Calu3 (cell line): ENCODE measurements at regions of chr14 and their contacts with region 1.

Region 1: GRCh38 chr14:60724137-60724619 is at the start of gene SIX4:
- DNase-seq: peak; percentile 75
- H3K4me3 Mint-ChIP-seq: peak within 1 kb of the TSS; percentile 92
- H3K27ac Mint-ChIP-seq: peak within 1 kb of the TSS; percentile 87
- H3K4me1 Mint-ChIP-seq: peaks cover 11% of the 10 kb centered on the region
- H3K27me3 Mint-ChIP-seq: no peaks in the 10 kb centered on the region
- CTCF ChIP-seq: no peak
- total RNA-seq, gene SIX4: 20.9 and 22.8 TPM in 2 replicates

Region 2: GRCh38 chr14:60637479-60638315 is 86.5 kb before region 1 on chr14:
- CTCF ChIA-PET with region 1: no interaction called
- intact Hi-C with region 1: no loop called
- DNase-seq: no peak
- H3K4me3 Mint-ChIP-seq: no peak overlapping the region
- H3K27ac Mint-ChIP-seq: no peak overlapping the region
- H3K4me1 Mint-ChIP-seq: no peaks in the 10 kb centered on the region
- H3K27me3 Mint-ChIP-seq: no peaks in the 10 kb centered on the region
- CTCF ChIP-seq: no peak

Region 3: GRCh38 chr14:60734465-60735242 is 10.5 kb after region 1 on chr14 and contains the start of gene MNAT1:
- CTCF ChIA-PET with region 1: interaction called, 5 read pairs
- intact Hi-C with region 1: loop called (anchors 1 kb)
- DNase-seq: peak; percentile 83
- H3K4me3 Mint-ChIP-seq: peak within 1 kb of the TSS; percentile 81
- H3K27ac Mint-ChIP-seq: peak within 1 kb of the TSS; percentile 63
- H3K4me1 Mint-ChIP-seq: peaks cover 8% of the 10 kb centered on the region
- H3K27me3 Mint-ChIP-seq: no peaks in the 10 kb centered on the region
- CTCF ChIP-seq: no peak
- total RNA-seq, gene MNAT1: 44.6 and 48.0 TPM in 2 replicates

Region 4: GRCh38 chr14:60753264-60754119 is 29.3 kb after region 1 on chr14:
- CTCF ChIA-PET with region 1: no interaction called
- intact Hi-C with region 1: no loop called
- DNase-seq: no peak
- H3K4me3 Mint-ChIP-seq: no peak overlapping the region
- H3K27ac Mint-ChIP-seq: no peak overlapping the region
- H3K4me1 Mint-ChIP-seq: peaks cover 18% of the 10 kb centered on the region
- H3K27me3 Mint-ChIP-seq: no peaks in the 10 kb centered on the region
- CTCF ChIP-seq: no peak

Region 5: DNA sequence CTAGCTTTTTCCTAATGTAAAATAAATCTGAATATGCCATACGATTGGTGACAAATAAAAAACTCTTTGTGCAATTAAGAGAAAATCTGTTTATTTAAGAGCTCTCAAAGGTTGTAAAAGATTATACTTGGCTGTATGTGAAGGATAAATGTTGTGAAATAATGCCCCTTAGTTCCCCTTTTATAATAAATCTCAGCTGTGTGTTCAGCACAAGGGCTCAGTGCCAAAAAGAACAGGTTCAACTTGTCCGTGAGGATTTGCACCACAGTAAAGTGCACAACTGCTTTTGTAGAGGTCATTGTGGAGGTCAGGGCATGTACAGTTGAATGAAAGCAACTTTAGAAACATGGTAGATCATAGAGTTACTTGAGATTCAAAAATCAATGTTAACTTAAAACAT is 138.1 kb after region 1 on chr14:
- CTCF ChIA-PET with region 1: no interaction called
- intact Hi-C with region 1: loop called (anchors 5 kb)
- DNase-seq: peak; percentile 84
- H3K4me3 Mint-ChIP-seq: peak overlapping the region; percentile 22
- H3K27ac Mint-ChIP-seq: peak overlapping the region; percentile 71
- H3K4me1 Mint-ChIP-seq: peaks cover 37% of the 10 kb centered on the region
- H3K27me3 Mint-ChIP-seq: no peaks in the 10 kb centered on the region
- CTCF ChIP-seq: no peak

Region 6: DNA sequence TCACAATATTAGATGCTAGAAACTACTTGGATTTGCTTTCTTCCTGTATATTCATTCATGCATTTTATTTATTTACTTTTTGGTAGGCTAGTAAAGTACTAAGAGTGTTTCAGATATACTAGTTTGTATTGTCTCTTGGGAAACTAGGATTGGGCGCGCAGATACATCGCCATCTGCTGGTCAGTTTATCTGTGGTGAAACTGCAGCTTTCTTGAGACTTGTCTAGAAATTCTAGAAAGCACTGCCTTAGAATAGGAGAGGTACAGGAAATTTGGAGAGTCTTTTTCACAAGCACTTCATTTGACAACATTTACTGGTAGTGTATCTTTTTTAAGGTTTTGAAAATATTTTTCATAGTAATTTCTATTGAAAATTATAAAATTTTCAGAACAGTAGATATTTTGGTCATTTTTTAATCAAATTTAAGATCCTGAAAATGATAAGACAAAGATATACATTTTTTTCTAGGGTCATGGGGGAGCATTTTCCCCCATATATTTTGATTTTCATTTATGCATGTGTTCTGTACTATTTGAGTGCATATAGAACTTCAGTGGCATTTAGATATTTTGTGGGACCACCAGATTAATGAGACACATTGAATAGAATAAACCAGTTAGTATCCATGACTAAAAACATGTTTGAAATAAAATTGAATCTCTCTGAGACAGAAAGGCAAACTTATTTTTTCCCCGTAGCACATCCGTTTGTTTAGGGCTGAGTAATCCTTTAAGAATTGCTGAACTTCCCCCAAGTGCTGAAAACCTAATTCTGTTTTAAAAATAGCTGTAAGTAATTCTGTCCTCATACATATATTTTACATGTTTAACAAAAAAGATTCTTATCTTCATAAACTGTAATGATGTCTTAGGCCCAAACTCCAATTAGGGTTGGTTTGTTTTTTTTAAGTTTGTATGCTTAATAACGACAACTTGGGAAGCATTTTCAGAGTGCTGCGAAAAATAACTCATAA is 301.4 kb after region 1 on chr14:
- CTCF ChIA-PET with region 1: no interaction called
- intact Hi-C with region 1: loop called (anchors 5 kb)
- DNase-seq: peak; percentile 59
- H3K4me3 Mint-ChIP-seq: no peak overlapping the region
- H3K27ac Mint-ChIP-seq: no peak overlapping the region
- H3K4me1 Mint-ChIP-seq: no peaks in the 10 kb centered on the region
- H3K27me3 Mint-ChIP-seq: no peaks in the 10 kb centered on the region
- CTCF ChIP-seq: peak; percentile 56

Region 7: DNA sequence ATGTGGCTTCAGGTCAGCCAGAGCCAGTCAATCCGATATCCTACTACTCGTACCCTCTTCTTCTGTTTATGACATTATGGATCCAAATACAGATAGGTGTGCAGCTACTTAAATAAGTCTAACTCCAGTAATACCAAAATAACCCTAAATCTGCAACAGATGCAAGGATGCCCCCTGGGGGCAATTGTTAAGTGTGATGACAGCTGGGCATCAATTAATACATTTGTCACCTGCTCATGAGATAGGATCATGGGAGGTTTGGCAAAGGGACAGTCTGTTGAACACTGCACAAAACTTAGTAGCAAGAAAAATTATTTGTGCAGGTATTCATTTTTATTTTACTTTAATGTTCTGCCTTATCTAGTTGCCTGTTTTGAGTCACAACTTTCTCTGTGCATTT is 340.0 kb after region 1 on chr14:
- CTCF ChIA-PET with region 1: no interaction called
- intact Hi-C with region 1: no loop called
- DNase-seq: no peak
- H3K4me3 Mint-ChIP-seq: no peak overlapping the region
- H3K27ac Mint-ChIP-seq: no peak overlapping the region
- H3K4me1 Mint-ChIP-seq: peaks cover 9% of the 10 kb centered on the region
- H3K27me3 Mint-ChIP-seq: no peaks in the 10 kb centered on the region
- CTCF ChIP-seq: no peak